ENCODE measurements at regions of chr13 and their contacts with region 1.

Region 1: GRCh38 chr13:25114220-25114619 is 18.3 kb downstream of the PABPC3 start:
- DNase-seq: peak; percentile 75
- ATAC-seq: peak; percentile 62
- H3K4me3 ChIP-seq: no peak overlapping the region
- H3K4me3 Mint-ChIP-seq: no peak overlapping the region
- H3K27ac ChIP-seq: no peak overlapping the region
- H3K27ac Mint-ChIP-seq: no peak overlapping the region
- H3K4me1 ChIP-seq: no peaks in the 10 kb centered on the region
- H3K4me1 Mint-ChIP-seq: peaks cover 2% of the 10 kb centered on the region
- H3K27me3 ChIP-seq: peaks cover 0 to 19% (median 1%) of the 10 kb centered on the region in 4 experiments
- H3K27me3 Mint-ChIP-seq: peaks cover 41% of the 10 kb centered on the region
- CTCF ChIP-seq: peak; percentile 91

Region 2: DNA sequence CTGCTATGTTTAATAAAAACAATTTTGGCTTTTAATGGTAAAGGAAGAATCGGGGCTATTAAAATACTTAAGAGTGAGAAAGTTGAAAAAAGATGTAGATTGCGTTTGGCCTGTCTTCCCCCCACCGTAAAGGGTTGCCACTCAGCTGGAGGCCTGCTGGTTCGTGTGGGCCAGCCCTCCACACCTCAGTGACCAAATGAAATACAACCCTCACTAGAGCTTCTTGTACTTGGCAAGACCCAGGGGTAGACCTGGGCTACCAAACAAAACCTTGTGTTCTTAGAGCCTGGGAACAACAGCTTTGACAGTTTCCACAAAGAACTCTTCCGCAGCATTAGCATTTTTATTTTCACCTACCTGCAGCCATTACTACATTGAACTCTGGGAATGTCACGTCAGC is 171.1 kb before region 1 on chr13:
- CTCF ChIA-PET with region 1: no interaction called
- POLR2A ChIA-PET with region 1: no interaction called
- intact Hi-C with region 1: no loop called
- DNase-seq: no peak
- ATAC-seq: no peak
- H3K4me3 ChIP-seq: no peak overlapping the region
- H3K4me3 Mint-ChIP-seq: no peak overlapping the region
- H3K27ac ChIP-seq: no peak overlapping the region
- H3K27ac Mint-ChIP-seq: no peak overlapping the region
- H3K4me1 ChIP-seq: no peaks in the 10 kb centered on the region
- H3K4me1 Mint-ChIP-seq: no peaks in the 10 kb centered on the region
- H3K27me3 ChIP-seq: no peaks in the 10 kb centered on the region
- H3K27me3 Mint-ChIP-seq: peaks cover 23% of the 10 kb centered on the region
- CTCF ChIP-seq: no peak

Region 3: DNA sequence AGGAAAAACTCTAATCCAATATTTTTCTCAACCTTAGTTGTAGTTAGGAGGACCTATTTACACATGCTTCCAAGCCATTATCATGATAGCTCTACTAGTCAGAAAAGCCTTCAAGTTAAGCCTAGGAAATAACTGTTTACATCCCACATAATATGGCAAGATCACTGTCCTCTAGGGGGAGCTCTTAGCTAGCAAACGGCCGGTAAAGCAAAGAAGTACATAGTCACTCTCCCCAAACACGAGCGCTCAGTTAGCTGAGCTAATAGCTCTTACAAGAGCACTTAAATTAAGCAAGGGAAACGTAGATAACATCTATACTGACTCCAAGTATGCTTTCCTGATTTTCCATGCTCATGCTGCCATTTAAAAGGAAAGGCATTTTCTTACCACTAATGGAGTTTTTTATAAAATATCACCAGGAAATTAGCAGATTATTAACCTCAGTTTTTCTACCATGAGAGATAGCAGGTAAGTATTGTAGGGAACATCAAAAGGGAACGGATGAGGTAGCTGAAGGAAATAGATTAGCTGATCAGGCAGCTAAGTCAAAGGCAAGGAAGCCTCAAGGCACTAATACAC is 118.9 kb before region 1 on chr13:
- CTCF ChIA-PET with region 1: interaction called, 10 read pairs
- POLR2A ChIA-PET with region 1: no interaction called
- intact Hi-C with region 1: no loop called
- DNase-seq: peak; percentile 77
- ATAC-seq: peak; percentile 65
- H3K4me3 ChIP-seq: no peak overlapping the region
- H3K4me3 Mint-ChIP-seq: no peak overlapping the region
- H3K27ac ChIP-seq: no peak overlapping the region
- H3K27ac Mint-ChIP-seq: no peak overlapping the region
- H3K4me1 ChIP-seq: no peaks in the 10 kb centered on the region
- H3K4me1 Mint-ChIP-seq: peaks cover 3% of the 10 kb centered on the region
- H3K27me3 ChIP-seq: peaks cover 0 to 9% (median 0%) of the 10 kb centered on the region in 4 experiments
- H3K27me3 Mint-ChIP-seq: peaks cover 40% of the 10 kb centered on the region
- CTCF ChIP-seq: peak; percentile 94

Region 4: GRCh38 chr13:25214491-25215252 is 100.5 kb after region 1 on chr13:
- CTCF ChIA-PET with region 1: no interaction called
- POLR2A ChIA-PET with region 1: no interaction called
- intact Hi-C with region 1: no loop called
- DNase-seq: no peak
- ATAC-seq: no peak
- H3K4me3 ChIP-seq: no peak overlapping the region
- H3K4me3 Mint-ChIP-seq: no peak overlapping the region
- H3K27ac ChIP-seq: no peak overlapping the region
- H3K27ac Mint-ChIP-seq: no peak overlapping the region
- H3K4me1 ChIP-seq: no peaks in the 10 kb centered on the region
- H3K4me1 Mint-ChIP-seq: no peaks in the 10 kb centered on the region
- H3K27me3 ChIP-seq: no peaks in the 10 kb centered on the region
- H3K27me3 Mint-ChIP-seq: peaks cover 13% of the 10 kb centered on the region
- CTCF ChIP-seq: no peak

Measured in B cell (primary cell).